ENCODE measurements at regions of chr4 and their contacts with region 1.

Region 1: DNA sequence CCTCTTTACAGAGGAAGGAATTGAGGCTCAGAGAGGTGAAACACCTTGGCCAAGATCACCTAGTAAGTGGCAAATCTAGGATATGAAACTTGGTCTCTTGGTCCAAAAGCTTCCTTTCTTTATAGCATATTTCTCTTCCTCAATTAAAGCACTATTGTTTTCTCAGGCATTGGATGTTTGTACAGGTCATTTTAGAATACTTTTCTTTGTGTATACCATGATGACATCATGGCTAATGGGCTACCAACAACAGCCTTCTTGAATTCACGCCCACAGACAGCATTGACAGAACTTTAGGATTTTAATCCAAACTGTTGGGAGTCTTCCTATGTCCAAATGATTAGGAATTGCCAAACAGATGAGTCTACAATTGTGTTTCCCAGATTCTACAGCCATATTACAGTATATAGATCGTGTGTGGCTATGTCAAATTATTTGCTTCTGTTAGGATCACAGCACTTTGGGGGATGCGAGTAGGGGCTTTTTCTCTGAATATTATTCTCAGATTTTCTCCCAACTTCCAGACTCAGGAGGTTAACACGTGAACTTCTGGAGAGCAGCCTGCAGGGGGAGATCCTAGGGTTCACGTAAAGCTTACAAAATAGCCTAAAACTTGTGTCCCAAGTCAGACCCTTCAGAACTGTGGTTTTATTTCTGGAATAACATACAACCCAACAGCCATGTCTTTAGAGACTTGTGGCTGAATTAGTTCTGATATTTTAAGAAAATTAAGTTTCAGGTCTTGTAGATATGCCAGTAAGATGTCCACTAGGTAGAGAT is 191.8 kb downstream of the SHROOM3 start:
- DNase-seq: no peak
- ATAC-seq: peak; percentile 75
- H3K4me3 ChIP-seq: no peak overlapping the region
- H3K27ac ChIP-seq: no peak overlapping the region
- H3K4me1 ChIP-seq: peaks cover 0 to 19% of the 10 kb centered on the region in 2 experiments; a peak in 1 of 4 replicates
- H3K27me3 ChIP-seq: no peaks in the 10 kb centered on the region
- CTCF ChIP-seq: peak in 2 of 3 experiments; percentile 60 to 68; a peak in 4 of 6 replicates
- POLR2A ChIP-seq: no peak
- RAD21 ChIP-seq: peak; percentile 50

Region 2: DNA sequence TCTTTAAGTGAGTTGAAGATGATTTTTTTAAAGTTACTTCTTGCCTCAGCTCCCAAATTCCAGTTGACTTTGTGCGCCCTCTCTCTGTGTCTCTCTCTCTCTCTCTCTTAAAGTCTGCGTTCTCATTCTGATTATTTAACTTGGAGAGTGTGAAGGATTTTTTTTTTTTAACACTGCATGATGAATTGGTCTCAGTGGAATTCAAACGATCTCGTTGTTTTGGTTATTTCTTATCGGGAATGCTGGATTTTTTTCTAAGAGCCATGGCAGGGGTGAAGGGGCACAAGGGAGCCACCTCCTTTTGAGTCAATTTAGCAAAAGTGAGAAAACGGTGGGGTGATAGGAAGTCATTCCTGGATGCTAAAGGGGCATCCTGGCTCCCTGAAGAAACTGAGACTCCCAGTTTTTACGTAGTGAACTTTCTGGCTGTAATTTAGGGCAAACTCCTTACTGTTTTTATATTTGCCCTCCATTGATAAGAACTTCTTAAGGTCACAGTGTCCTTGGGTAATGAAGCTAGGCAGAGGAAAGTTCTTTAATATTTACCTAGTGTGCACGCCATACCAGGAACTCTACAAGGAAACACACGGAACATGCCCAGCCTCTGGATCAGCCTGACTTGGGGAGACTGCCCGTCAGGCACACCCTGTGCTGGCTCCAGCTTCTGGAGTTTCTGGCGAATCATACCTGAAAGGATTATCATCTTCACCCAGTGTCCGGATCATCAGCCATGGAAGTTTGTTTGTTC is 15.5 kb before region 1 on chr4:
- CTCF ChIA-PET with region 1: no interaction called
- POLR2A ChIA-PET with region 1: no interaction called
- RAD21 ChIA-PET with region 1: no interaction called
- intact Hi-C with region 1: no loop called
- DNase-seq: no peak
- ATAC-seq: no peak
- H3K4me3 ChIP-seq: no peak overlapping the region
- H3K27ac ChIP-seq: no peak overlapping the region
- H3K4me1 ChIP-seq: no peaks in the 10 kb centered on the region
- H3K27me3 ChIP-seq: no peaks in the 10 kb centered on the region
- CTCF ChIP-seq: no peak
- POLR2A ChIP-seq: no peak
- RAD21 ChIP-seq: no peak

Region 3: DNA sequence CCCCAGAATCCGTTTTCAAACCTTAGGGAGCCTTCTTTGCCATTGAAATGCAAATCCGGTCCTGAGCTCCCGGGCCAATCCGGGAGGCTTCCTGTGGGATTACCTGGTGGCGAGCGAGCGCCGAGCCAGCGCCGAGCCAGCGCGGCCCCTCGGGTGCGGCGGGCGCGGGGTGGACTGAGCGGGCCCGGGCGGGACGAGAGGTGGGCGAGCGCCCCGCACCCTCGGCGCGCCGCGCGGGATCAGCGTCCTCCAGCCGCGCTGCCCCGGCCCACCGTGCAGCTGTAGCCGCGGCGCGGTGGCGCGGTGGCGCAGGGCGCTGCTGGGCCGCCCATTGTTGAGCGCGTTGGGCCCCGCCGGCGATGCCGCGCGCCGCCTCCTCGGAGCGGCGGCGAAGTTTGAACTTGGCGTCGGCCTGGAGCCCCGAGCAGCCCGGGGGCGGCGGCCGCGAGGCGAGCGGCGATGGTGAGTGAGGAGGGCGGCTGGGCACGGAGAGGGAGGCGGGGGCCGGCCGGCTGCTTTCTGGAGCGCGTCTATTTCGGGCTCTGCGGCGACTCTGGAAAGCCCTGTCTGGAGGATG is 62.5 kb after region 1 on chr4:
- CTCF ChIA-PET with region 1: no interaction called
- POLR2A ChIA-PET with region 1: no interaction called
- RAD21 ChIA-PET with region 1: no interaction called
- intact Hi-C with region 1: no loop called
- DNase-seq: peak; percentile 18
- ATAC-seq: peak; percentile 84
- H3K4me3 ChIP-seq: peak overlapping the region; percentile 68 to 77
- H3K27ac ChIP-seq: peak overlapping the region; percentile 71
- H3K4me1 ChIP-seq: peaks cover 2 to 37% of the 10 kb centered on the region in 2 experiments; a peak in 3 of 4 replicates
- H3K27me3 ChIP-seq: no peaks in the 10 kb centered on the region
- CTCF ChIP-seq: no peak
- POLR2A ChIP-seq: no peak
- RAD21 ChIP-seq: no peak

Region 4: DNA sequence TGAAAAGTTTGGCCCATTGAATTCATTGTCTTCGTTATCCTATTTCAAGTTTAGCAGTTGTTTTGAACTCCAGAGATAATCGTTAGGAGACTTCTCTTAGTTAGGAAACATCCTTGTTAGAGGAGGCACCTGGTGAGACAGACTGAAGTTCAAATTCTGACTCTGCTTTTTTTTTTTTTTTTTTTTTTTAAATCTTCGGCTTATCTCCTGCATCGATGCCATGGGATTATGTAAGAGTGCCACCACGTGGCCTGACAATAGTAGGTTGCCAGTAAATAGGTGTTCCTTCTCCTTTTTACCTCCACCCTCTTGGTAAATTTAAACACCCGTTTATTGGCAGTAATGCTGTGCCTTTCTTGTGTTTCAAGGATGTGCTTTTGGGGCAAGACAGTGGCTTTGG is 121.8 kb after region 1 on chr4:
- CTCF ChIA-PET with region 1: no interaction called
- POLR2A ChIA-PET with region 1: no interaction called
- RAD21 ChIA-PET with region 1: no interaction called
- intact Hi-C with region 1: loop called (anchors 5 kb)
- DNase-seq: no peak
- ATAC-seq: peak; percentile 55
- H3K4me3 ChIP-seq: no peak overlapping the region
- H3K27ac ChIP-seq: no peak overlapping the region
- H3K4me1 ChIP-seq: peaks cover 12 to 30% of the 10 kb centered on the region in 2 experiments
- H3K27me3 ChIP-seq: no peaks in the 10 kb centered on the region
- CTCF ChIP-seq: peak; percentile 15 to 62 (median 56); a peak in 3 of 6 replicates
- POLR2A ChIP-seq: no peak
- RAD21 ChIP-seq: peak; percentile 82

Measured in HCT116 (cell line).